Endothelial cell of umbilical vein (primary cell): ENCODE measurements at regions of chr4 and their contacts with region 1.

Region 1: DNA sequence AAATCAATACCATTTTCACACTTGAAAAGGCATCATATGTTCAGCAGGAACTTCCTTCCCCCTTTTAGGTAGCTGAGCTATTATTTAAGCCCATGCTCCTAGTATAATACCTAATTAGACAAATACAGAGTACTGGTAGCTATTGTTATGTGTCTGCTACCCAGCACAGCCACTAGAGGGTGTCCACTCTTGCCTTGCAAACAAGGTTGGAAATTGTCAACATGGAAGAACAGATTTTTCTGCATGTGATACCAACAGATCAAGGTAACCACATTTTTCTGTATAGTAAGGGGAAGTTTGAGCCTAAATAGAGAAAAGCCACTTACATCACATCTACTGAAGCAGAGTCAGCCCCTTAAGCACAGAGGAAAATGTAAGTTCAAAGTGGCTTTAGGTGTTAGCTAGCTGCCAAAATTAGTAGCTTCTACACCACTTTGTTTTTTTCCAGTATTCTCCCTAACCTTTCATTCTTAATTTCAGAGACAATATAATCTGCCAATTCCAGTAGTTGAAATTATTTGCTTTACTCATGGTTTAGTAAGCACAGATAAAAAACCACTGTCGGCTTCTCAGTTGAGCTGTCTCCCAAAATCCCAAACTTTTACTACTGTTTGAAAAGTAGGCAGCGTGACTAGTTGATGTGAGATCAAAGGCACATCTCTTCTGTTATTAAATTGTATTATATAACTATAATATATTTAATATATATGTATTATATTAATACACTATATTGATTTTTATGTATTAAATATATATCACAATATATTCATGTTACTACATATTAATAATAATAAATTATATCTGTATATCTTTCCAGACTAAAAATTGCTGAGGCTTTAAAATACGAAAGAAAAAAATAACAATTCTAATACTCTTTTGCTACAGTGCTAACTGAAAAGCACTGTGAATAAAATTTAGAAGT is 38.2 kb downstream of the EDNRA start:
- DNase-seq: peak; percentile 73
- H3K4me3 ChIP-seq: no peak overlapping the region
- H3K27ac ChIP-seq: no peak overlapping the region
- H3K4me1 ChIP-seq: no peaks in the 10 kb centered on the region
- H3K27me3 ChIP-seq: peaks cover 4 to 8% of the 10 kb centered on the region in 2 experiments
- CTCF ChIP-seq: peak; percentile 77 to 85
- POLR2A ChIP-seq: no peak

Region 2: DNA sequence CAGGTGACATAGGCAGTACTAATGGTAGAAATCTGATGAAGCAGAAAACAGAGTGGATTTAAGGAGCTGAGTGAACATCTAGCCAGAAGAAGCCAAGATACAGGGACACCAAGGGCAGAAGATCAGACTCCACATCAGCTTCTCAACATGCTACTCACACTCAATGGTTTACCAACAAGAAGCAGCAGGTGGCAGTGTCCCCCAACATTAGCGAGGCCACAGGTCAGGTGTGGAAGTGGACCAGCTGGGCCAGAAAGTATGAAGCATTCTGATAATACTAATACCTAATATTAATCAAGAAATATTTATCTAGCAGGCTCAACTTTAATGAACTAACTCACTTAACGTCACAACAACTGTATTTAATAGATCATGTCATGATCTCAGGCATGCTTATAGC is 500.0 kb before region 1 on chr4:
- CTCF ChIA-PET with region 1: interaction called, 22 read pairs
- POLR2A ChIA-PET with region 1: no interaction called
- dilution Hi-C with region 1: no loop called
- intact Hi-C with region 1: loop called (anchors 1 kb)
- DNase-seq: peak; percentile 62
- H3K4me3 ChIP-seq: no peak overlapping the region
- H3K27ac ChIP-seq: no peak overlapping the region
- H3K4me1 ChIP-seq: no peaks in the 10 kb centered on the region
- H3K27me3 ChIP-seq: peaks cover 7% of the 10 kb centered on the region in 2 experiments
- CTCF ChIP-seq: peak; percentile 52 to 66
- POLR2A ChIP-seq: no peak

Region 3: DNA sequence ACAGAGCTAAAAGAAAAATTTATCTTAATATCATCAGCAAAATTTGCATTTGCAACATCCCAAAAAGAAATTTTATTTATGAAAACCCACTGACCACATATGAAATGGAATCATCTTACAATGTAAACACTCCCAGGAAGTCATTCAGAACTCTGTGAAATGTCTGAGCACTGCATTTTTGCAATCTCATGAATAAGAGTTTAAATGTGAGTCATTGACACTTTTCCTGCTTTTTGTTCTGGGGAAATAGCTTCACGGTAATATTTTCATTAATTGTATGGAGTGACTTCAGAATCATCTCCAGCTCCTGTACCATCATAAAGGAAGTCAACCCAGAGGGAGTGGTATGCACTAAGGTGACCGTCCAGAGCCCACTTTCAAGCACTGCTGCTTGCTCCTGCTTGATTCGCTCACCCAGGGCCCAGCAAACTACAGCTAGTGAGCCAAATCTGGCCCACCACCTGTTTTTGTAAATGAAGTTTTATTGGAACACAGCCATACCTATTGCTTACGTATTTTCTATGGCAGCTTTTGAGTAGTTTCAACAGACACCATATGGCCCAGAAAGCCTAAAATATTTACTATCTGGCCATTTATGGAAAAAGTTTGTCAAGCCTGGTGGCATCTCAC is 21.0 kb before region 1 on chr4:
- CTCF ChIA-PET with region 1: interaction called, 10 read pairs
- POLR2A ChIA-PET with region 1: no interaction called
- dilution Hi-C with region 1: no loop called
- intact Hi-C with region 1: no loop called
- DNase-seq: peak; percentile 35
- H3K4me3 ChIP-seq: no peak overlapping the region
- H3K27ac ChIP-seq: no peak overlapping the region
- H3K4me1 ChIP-seq: peaks cover 10% of the 10 kb centered on the region
- H3K27me3 ChIP-seq: peaks cover 0 to 6% of the 10 kb centered on the region in 2 experiments
- CTCF ChIP-seq: no peak
- POLR2A ChIP-seq: no peak

Region 4: GRCh38 chr4:147546341-147546740 is 27.2 kb after region 1 on chr4:
- CTCF ChIA-PET with region 1: interaction called, 17 read pairs
- POLR2A ChIA-PET with region 1: no interaction called
- dilution Hi-C with region 1: no loop called
- intact Hi-C with region 1: no loop called
- DNase-seq: peak; percentile 63
- H3K4me3 ChIP-seq: no peak overlapping the region
- H3K27ac ChIP-seq: no peak overlapping the region
- H3K4me1 ChIP-seq: peaks cover 3% of the 10 kb centered on the region
- H3K27me3 ChIP-seq: peaks cover 0 to 3% of the 10 kb centered on the region in 2 experiments
- CTCF ChIP-seq: no peak
- POLR2A ChIP-seq: no peak

Region 5: GRCh38 chr4:147570616-147571015 is 51.5 kb after region 1 on chr4:
- CTCF ChIA-PET with region 1: interaction called, 10 read pairs
- POLR2A ChIA-PET with region 1: no interaction called
- dilution Hi-C with region 1: no loop called
- intact Hi-C with region 1: no loop called
- DNase-seq: no peak
- H3K4me3 ChIP-seq: no peak overlapping the region
- H3K27ac ChIP-seq: no peak overlapping the region
- H3K4me1 ChIP-seq: no peaks in the 10 kb centered on the region
- H3K27me3 ChIP-seq: peaks cover 9 to 13% of the 10 kb centered on the region in 2 experiments
- CTCF ChIP-seq: no peak
- POLR2A ChIP-seq: no peak

Region 6: DNA sequence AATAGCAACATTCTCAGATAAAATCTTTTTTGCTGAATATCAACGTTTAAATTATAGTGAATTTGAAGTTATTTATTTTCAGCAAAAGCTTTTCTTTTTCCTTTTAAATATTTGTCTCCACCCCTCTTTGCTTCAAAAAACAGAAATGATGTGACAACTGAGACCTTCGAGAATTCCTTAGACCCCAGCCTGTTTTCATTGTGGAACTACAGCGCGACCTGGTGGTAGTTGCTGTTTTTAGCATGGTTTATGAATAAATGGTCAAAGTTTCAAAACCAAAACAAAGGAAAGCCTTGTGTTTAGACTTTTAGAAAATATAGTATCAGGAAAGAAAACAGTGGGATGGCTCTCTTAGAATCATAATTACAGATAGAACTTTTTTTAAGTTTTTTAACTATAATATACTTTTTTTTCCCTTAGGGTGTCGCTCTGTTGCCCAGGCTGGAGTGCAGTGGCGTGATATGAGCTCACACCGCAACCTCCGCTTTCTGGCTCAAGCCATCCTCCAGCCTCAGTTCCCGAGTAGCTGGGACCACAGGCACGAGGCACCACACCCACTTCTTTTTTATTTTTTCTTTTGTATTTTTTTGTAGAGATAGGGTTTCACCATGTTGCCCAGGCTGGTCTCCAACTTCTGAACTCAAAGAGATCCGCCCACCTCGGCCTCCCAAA is 71.3 kb after region 1 on chr4:
- CTCF ChIA-PET with region 1: interaction called, 233 read pairs
- POLR2A ChIA-PET with region 1: no interaction called
- dilution Hi-C with region 1: no loop called
- intact Hi-C with region 1: loop called (anchors 1 kb)
- DNase-seq: peak; percentile 70
- H3K4me3 ChIP-seq: no peak overlapping the region
- H3K27ac ChIP-seq: no peak overlapping the region
- H3K4me1 ChIP-seq: no peaks in the 10 kb centered on the region
- H3K27me3 ChIP-seq: peaks cover 0 to 3% of the 10 kb centered on the region in 2 experiments
- CTCF ChIP-seq: peak; percentile 52 to 53
- POLR2A ChIP-seq: no peak

Region 7: DNA sequence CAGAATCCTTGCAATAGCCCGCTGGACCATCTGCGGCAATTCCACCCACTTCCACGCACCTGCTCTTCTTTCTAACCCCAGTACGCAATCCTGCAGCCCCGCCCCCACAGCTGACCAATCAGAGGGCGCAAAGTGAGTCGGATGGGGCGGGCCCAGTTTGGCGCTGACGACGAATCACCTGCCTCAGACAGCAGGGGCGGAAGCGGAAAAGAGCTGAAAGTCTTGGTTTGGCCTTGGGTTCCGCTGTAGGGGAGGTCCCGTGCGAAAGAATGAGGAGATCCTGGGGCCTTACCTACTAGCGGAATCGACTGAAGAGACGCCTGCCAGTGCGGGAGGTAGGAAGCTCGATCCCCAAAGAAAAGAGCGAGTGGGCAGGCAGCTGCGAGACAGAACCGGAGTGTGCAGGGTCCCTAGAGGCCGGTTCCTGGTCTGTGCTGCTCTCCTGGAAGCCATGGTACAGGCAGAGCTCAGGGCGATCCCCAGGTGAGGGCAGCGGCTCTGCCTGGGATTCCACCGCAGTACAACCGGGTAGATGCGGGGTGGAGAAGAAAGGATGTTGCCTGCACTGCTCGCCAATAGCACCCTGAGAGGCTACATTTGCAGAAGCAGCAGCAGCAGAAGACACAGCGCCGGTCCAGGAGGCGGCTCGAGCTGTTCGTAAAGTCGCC is 98.2 kb after region 1 on chr4 and contains the start of gene TMEM184C:
- CTCF ChIA-PET with region 1: interaction called, 11 read pairs
- POLR2A ChIA-PET with region 1: no interaction called
- dilution Hi-C with region 1: no loop called
- intact Hi-C with region 1: no loop called
- DNase-seq: peak; percentile 96
- H3K4me3 ChIP-seq: peak within 1 kb of the TSS; percentile 30 to 93 (median 90)
- H3K27ac ChIP-seq: peak within 1 kb of the TSS; percentile 48
- H3K4me1 ChIP-seq: peaks cover 9% of the 10 kb centered on the region
- H3K27me3 ChIP-seq: peaks cover 8 to 12% of the 10 kb centered on the region in 2 experiments
- CTCF ChIP-seq: peak in 1 of 2 donors; percentile 16
- POLR2A ChIP-seq: peak; percentile 84
- total RNA-seq, gene TMEM184C: 27.1 and 29.2 TPM in 2 replicates

Region 8: GRCh38 chr4:147741190-147741785 is 222.2 kb after region 1 on chr4:
- CTCF ChIA-PET with region 1: no interaction called
- POLR2A ChIA-PET with region 1: no interaction called
- dilution Hi-C with region 1: no loop called
- intact Hi-C with region 1: no loop called
- DNase-seq: no peak
- H3K4me3 ChIP-seq: no peak overlapping the region
- H3K27ac ChIP-seq: no peak overlapping the region
- H3K4me1 ChIP-seq: peaks cover 6% of the 10 kb centered on the region
- H3K27me3 ChIP-seq: no peaks in the 10 kb centered on the region
- CTCF ChIP-seq: no peak
- POLR2A ChIP-seq: no peak